Caco-2 (cell line): ENCODE measurements at regions of chr16 and their contacts with region 1.

Region 1: GRCh38 chr16:7086822-7087616 is 245.6 kb upstream of the RBFOX1 start:
- DNase-seq: peak; percentile 58 to 60
- H3K4me3 ChIP-seq: no peak overlapping the region
- H3K4me3 Mint-ChIP-seq: no peak overlapping the region
- H3K27ac Mint-ChIP-seq: no peak overlapping the region
- H3K4me1 ChIP-seq: no peaks in the 10 kb centered on the region
- H3K4me1 Mint-ChIP-seq: no peaks in the 10 kb centered on the region
- H3K27me3 ChIP-seq: no peaks in the 10 kb centered on the region
- H3K27me3 Mint-ChIP-seq: peaks cover 5% of the 10 kb centered on the region
- CTCF ChIP-seq: peak; percentile 65 to 68

Region 2: GRCh38 chr16:6682142-6682811 is 404.7 kb before region 1 on chr16:
- CTCF ChIA-PET with region 1: no interaction called
- POLR2A ChIA-PET with region 1: no interaction called
- intact Hi-C with region 1: loop called (anchors 10 kb)
- DNase-seq: peak; percentile 35 to 37
- H3K4me3 ChIP-seq: no peak overlapping the region
- H3K4me3 Mint-ChIP-seq: no peak overlapping the region
- H3K27ac Mint-ChIP-seq: no peak overlapping the region
- H3K4me1 ChIP-seq: no peaks in the 10 kb centered on the region
- H3K4me1 Mint-ChIP-seq: no peaks in the 10 kb centered on the region
- H3K27me3 ChIP-seq: no peaks in the 10 kb centered on the region
- H3K27me3 Mint-ChIP-seq: no peaks in the 10 kb centered on the region
- CTCF ChIP-seq: peak; percentile 47 to 55

Region 3: DNA sequence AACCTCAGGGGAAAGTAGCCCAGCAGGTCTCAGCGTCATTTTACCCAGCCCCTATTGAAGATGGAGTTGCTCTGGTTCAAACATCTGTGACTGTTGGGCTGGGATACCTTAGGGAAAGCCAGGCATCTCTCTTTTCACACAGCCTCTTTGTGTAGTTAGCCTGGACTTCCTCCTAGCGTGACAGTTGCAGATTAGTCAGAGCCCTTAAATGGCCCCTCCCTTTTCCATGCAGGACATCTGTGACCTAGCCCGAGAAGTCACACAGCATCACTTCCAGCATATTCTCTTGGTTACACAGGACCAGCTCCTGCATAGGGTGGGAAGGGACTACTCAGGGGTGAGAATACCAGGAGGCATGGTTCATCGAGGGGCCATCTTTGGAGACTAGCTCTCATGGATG is 129.3 kb before region 1 on chr16:
- CTCF ChIA-PET with region 1: no interaction called
- POLR2A ChIA-PET with region 1: no interaction called
- intact Hi-C with region 1: no loop called
- DNase-seq: no peak
- H3K4me3 ChIP-seq: no peak overlapping the region
- H3K4me3 Mint-ChIP-seq: no peak overlapping the region
- H3K27ac Mint-ChIP-seq: no peak overlapping the region
- H3K4me1 ChIP-seq: no peaks in the 10 kb centered on the region
- H3K4me1 Mint-ChIP-seq: no peaks in the 10 kb centered on the region
- H3K27me3 ChIP-seq: no peaks in the 10 kb centered on the region
- H3K27me3 Mint-ChIP-seq: no peaks in the 10 kb centered on the region
- CTCF ChIP-seq: no peak

Region 4: DNA sequence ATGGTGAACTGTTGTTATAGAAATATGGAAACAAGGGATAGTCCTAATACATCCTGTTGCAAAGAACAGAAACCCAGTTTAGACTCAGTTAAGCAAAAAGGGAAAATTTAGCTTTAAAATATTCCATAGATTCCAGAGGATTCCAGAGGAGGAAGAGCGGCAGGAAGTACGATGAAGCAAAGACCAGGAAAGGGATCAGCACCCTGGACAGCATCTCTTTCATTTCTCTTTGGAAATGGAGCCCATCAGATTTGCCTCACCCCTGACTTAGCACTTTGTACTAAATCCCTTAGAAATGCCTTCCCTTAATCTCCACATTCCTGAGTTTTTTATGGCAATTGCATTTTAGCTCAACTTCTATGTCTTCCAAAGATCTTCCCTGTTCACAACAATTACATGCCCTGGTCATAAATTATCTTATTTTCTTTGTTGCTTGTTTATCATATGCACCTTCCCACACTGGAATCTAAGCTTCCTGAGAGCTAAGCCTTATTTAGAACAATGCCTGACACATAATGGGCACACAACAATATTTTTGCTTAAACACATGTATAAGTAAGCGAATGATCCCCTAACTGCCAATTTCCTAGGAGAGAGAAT is 95.6 kb after region 1 on chr16:
- CTCF ChIA-PET with region 1: no interaction called
- POLR2A ChIA-PET with region 1: no interaction called
- intact Hi-C with region 1: loop called (anchors 5 kb)
- DNase-seq: peak in 1 of 2 experiments; percentile 45
- H3K4me3 ChIP-seq: no peak overlapping the region
- H3K4me3 Mint-ChIP-seq: no peak overlapping the region
- H3K27ac Mint-ChIP-seq: no peak overlapping the region
- H3K4me1 ChIP-seq: 0 out of 2 replicates have a peak, but pooled peaks cover 6% of the 10 kb centered on the region
- H3K4me1 Mint-ChIP-seq: peaks cover 6% of the 10 kb centered on the region
- H3K27me3 ChIP-seq: no peaks in the 10 kb centered on the region
- H3K27me3 Mint-ChIP-seq: no peaks in the 10 kb centered on the region
- CTCF ChIP-seq: no peak